H1 (cell line): ENCODE measurements at regions of chr1 and their contacts with region 1.

Region 1: DNA sequence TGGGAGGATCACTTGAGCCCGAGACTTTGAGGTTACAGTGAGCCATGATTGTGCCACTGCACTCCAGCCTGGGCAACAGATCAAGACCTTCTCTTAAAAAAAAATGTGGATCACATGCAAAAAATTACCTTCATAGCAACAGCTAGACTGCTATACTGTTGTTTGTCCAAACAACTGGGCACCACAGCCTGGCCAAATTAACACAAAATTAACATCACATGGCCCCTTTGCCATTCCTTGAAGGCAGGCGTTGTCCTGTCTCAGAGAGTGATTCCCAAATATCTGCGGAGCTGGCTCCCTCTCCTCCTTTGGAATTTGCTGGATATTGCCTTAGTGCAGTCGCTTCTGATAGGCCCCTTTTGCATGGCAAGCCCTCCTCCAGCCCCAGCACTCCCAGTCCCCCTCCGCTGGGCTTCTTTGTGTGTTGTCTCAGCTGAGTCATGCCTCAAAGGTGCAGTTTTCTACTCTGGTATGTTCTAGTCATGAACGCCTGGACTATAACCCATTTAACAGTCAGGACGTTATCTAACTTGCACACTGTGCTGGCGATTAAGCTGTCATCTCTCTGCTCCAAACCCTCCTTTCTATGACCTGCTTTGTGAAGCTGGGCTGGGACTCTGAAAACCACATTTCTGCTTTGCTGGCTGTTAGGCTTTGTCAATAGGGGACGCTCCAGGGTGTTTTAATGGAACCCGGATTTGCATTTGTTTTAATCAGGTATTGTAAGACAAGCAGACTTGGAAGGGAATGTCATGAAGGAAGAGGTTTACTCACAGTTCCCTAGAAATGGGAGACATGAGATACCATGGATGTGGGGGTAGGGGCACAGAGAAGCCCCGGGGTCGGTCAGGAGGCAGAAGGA is 20.1 kb upstream of the HPCAL4 start:
- DNase-seq: no peak
- H3K4me3 ChIP-seq: no peak overlapping the region
- H3K27ac ChIP-seq: no peak overlapping the region
- H3K4me1 ChIP-seq: peaks cover 3 to 15% (median 4%) of the 10 kb centered on the region in 4 experiments; a peak in 5 of 7 replicates
- H3K27me3 ChIP-seq: peaks cover 88 to 100% (median 96%) of the 10 kb centered on the region in 4 experiments
- CTCF ChIP-seq: peak in 1 of 3 experiments; percentile 8; a peak in 1 of 4 replicates
- EP300 ChIP-seq: no peak
- POLR2A ChIP-seq: no peak
- RAD21 ChIP-seq: no peak

Region 2: GRCh38 chr1:39691262-39692151 is 19.8 kb before region 1 on chr1 and contains the start of gene HPCAL4:
- CTCF ChIA-PET with region 1: interaction called, 17 read pairs
- POLR2A ChIA-PET with region 1: no interaction called
- DNase-seq: peak; percentile 77 to 97
- H3K4me3 ChIP-seq: peak within 1 kb of the TSS; percentile 8 to 56 (median 22); a peak in 7 of 8 replicates
- H3K27ac ChIP-seq: no peak within 1 kb of the TSS
- H3K4me1 ChIP-seq: peaks cover 0 to 19% (median 7%) of the 10 kb centered on the region in 4 experiments; a peak in 5 of 7 replicates
- H3K27me3 ChIP-seq: peaks cover 75 to 99% (median 87%) of the 10 kb centered on the region in 4 experiments
- CTCF ChIP-seq: no peak
- EP300 ChIP-seq: no peak
- POLR2A ChIP-seq: no peak
- RAD21 ChIP-seq: no peak
- total RNA-seq, gene HPCAL4: 0.46 and 0.54 TPM in 2 replicates

Region 3: DNA sequence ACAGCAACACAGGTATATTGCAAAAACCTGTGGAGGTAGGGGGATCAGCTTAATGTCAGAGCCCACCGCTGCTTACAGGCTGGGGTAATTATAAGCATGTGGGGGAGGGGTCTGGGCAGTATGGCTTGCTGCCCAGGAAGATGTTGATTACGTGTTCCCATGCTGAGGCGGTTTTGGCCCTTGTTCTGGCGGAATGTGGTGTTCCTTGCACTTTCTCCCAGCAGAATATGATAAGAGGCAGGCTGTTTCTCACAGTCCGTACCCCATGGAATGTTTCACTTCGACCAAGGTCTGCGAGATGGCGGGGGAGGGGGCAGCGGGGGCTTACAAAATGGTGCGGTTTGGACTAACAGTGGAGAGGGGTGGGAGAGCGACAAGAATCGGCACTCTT is 10.3 kb before region 1 on chr1:
- CTCF ChIA-PET with region 1: interaction called, 36 read pairs
- POLR2A ChIA-PET with region 1: interaction called, 16 read pairs
- DNase-seq: no peak
- H3K4me3 ChIP-seq: peak overlapping the region; percentile 3 to 48 (median 22); a peak in 5 of 8 replicates
- H3K27ac ChIP-seq: no peak overlapping the region
- H3K4me1 ChIP-seq: peaks cover 0 to 17% (median 9%) of the 10 kb centered on the region in 4 experiments; a peak in 5 of 7 replicates
- H3K27me3 ChIP-seq: peaks cover 29 to 93% (median 65%) of the 10 kb centered on the region in 4 experiments
- CTCF ChIP-seq: no peak
- EP300 ChIP-seq: no peak
- POLR2A ChIP-seq: no peak
- RAD21 ChIP-seq: no peak